ENCODE measurements at regions of chr12 and their contacts with region 1.

Region 1: GRCh38 chr12:113022563-113023297 is 33.8 kb upstream of the DTX1 start:
- DNase-seq: no peak
- H3K4me3 ChIP-seq: no peak overlapping the region
- H3K27ac ChIP-seq: no peak overlapping the region
- H3K4me1 ChIP-seq: no peaks in the 10 kb centered on the region
- H3K27me3 ChIP-seq: no peaks in the 10 kb centered on the region
- CTCF ChIP-seq: no peak
- POLR2A ChIP-seq: no peak

Region 2: DNA sequence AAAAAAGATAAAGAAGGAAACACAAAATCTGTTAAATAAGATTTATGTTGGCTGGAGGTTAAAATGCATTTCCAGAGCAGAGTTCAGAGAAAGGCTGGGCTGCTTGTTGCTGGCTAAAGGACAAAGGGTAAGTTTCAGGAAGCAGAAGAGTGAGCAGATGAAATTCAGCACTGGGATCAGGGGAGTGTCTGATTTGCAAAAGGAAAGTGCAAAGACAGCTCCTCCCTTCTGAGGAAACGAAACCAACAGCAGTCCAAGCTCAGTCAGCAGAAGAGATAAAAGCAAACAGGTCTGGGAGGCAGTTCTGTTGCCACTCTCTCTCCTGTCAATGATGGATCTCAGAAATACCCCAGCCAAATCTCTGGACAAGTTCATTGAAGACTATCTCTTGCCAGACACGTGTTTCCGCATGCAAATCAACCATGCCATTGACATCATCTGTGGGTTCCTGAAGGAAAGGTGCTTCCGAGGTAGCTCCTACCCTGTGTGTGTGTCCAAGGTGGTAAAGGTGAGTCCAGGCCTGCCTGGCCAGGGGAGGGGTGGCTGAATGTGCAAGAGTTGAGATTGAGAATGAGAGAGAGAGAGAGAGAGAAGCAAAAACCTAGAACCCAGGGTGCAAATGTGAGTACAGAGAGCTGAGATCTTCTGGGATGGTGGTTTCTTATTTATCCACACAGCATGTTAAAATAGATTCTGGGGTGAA is 115.9 kb before region 1 on chr12 and contains the start of gene OAS1:
- intact Hi-C with region 1: loop called (anchors 10 kb)
- DNase-seq: peak; percentile 59
- H3K4me3 ChIP-seq: peak within 1 kb of the TSS; percentile 20 to 28
- H3K27ac ChIP-seq: peak within 1 kb of the TSS; percentile 30 to 66
- H3K4me1 ChIP-seq: no peaks in the 10 kb centered on the region
- H3K27me3 ChIP-seq: no peaks in the 10 kb centered on the region
- CTCF ChIP-seq: no peak
- POLR2A ChIP-seq: peak; percentile 38
- total RNA-seq, gene OAS1: 8.2 to 14.2 TPM